IMR-90 (cell line): ENCODE measurements at regions of chr12 and their contacts with region 1.

Region 1: GRCh38 chr12:82383930-82384552 is 25.7 kb downstream of the METTL25 start:
- DNase-seq: peak; percentile 54
- ATAC-seq: peak; percentile 80
- H3K4me3 ChIP-seq: no peak overlapping the region
- H3K27ac ChIP-seq: no peak overlapping the region
- H3K4me1 ChIP-seq: no peaks in the 10 kb centered on the region
- H3K27me3 ChIP-seq: no peaks in the 10 kb centered on the region
- CTCF ChIP-seq: peak; percentile 62
- POLR2A ChIP-seq: no peak
- RAD21 ChIP-seq: peak; percentile 69

Region 2: GRCh38 chr12:82329508-82329907 is 54.5 kb before region 1 on chr12:
- CTCF ChIA-PET with region 1: no interaction called
- POLR2A ChIA-PET with region 1: no interaction called
- dilution Hi-C with region 1: no loop called
- in situ Hi-C with region 1: no loop called
- intact Hi-C with region 1: no loop called
- DNase-seq: no peak
- ATAC-seq: no peak
- H3K4me3 ChIP-seq: no peak overlapping the region
- H3K27ac ChIP-seq: no peak overlapping the region
- H3K4me1 ChIP-seq: no peaks in the 10 kb centered on the region
- H3K27me3 ChIP-seq: no peaks in the 10 kb centered on the region
- CTCF ChIP-seq: no peak
- POLR2A ChIP-seq: no peak
- RAD21 ChIP-seq: no peak

Region 3: DNA sequence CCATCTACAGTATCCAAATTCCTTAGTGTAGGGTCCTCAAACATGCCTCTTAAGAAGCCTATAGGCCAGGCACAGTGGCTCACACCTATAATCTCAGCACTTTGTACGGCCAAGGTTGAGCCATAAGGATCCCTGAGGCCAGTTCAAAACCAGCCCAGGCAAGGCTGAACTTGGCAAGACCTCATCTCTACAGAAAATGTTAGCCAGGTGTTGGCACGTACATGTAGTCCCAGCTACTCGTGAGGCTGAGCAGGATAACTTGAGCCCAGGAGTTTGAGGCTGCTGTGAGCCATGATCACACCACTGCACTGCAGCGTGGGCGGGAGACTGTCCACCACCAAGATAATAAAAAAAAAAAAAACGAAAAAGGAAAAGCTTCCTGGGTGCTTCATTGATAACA is 32.7 kb before region 1 on chr12:
- CTCF ChIA-PET with region 1: no interaction called
- POLR2A ChIA-PET with region 1: no interaction called
- dilution Hi-C with region 1: no loop called
- in situ Hi-C with region 1: no loop called
- intact Hi-C with region 1: no loop called
- DNase-seq: no peak
- ATAC-seq: no peak
- H3K4me3 ChIP-seq: no peak overlapping the region
- H3K27ac ChIP-seq: no peak overlapping the region
- H3K4me1 ChIP-seq: no peaks in the 10 kb centered on the region
- H3K27me3 ChIP-seq: no peaks in the 10 kb centered on the region
- CTCF ChIP-seq: no peak
- POLR2A ChIP-seq: no peak
- RAD21 ChIP-seq: no peak

Region 4: DNA sequence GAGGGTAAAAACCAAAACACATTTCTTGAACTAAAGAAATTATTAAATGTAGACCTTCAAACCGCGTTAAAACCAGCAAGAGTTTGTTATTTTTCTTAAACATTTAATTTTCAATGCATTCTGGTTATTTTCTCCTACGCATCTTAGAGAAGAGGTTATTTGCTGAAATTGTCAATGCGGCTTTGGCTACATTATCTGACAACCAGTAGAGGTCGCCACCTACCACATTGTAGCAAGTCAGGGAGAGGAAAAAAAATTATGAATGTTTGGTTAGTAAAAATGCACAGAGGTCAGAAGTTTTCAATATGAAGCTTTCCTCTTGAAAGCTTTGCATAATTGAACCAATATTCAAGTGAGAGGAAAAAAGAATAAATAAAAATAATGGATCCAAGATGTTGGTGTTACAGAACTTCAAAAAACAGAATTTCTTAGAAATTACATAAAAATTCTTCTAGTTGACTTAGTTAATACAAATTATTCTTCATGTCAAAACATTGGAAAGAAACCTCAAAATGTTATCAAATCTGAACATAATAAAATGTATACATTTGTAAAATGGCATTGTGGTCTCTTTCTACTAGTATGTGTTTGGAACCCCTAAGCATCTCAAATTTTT is 143.2 kb after region 1 on chr12:
- CTCF ChIA-PET with region 1: no interaction called
- POLR2A ChIA-PET with region 1: no interaction called
- dilution Hi-C with region 1: no loop called
- in situ Hi-C with region 1: no loop called
- intact Hi-C with region 1: loop called (anchors 5 kb)
- DNase-seq: peak; percentile 64
- ATAC-seq: peak; percentile 76; the same call in 1 of the 2 replicates
- H3K4me3 ChIP-seq: no peak overlapping the region
- H3K27ac ChIP-seq: no peak overlapping the region
- H3K4me1 ChIP-seq: no peaks in the 10 kb centered on the region
- H3K27me3 ChIP-seq: no peaks in the 10 kb centered on the region
- CTCF ChIP-seq: peak; percentile 86
- POLR2A ChIP-seq: no peak
- RAD21 ChIP-seq: peak; percentile 65